ENCODE measurements at regions of chr1 and their contacts with region 1.

Region 1: DNA sequence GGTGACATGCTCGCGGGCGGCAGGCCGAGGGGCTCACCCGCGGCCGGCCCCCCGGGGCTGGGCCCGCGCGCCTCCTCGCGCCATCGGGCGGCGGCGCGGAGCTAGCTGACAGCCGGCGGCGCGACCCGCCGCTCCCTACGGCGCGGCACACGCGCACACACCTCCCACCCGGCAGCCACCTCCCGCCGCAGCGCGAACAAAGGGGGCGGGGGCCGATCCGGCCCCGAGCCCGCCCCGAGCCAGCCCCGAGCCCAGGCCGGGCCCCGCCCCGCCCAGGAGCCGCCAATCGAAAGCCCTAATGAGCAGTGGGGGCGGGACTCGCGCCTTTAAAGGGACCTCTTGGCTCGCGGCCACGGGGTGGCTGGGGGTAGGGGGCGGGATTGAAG is at the start of gene KIF21B:
- DNase-seq: peak; percentile 86 to 95 (median 91)
- ATAC-seq: peak; percentile 91
- H3K4me3 ChIP-seq: peak within 1 kb of the TSS; percentile 93
- H3K4me3 Mint-ChIP-seq: peak within 1 kb of the TSS; percentile 91 to 100 (median 96)
- H3K27ac ChIP-seq: peak within 1 kb of the TSS; percentile 83
- H3K27ac Mint-ChIP-seq: peak within 1 kb of the TSS; percentile 93 to 100 (median 98)
- H3K4me1 ChIP-seq: peaks cover 39 to 59% of the 10 kb centered on the region in 2 donors
- H3K4me1 Mint-ChIP-seq: peaks cover 51 to 77% (median 70%) of the 10 kb centered on the region in 7 donors
- H3K27me3 ChIP-seq: no peaks in the 10 kb centered on the region
- H3K27me3 Mint-ChIP-seq: no peaks in the 10 kb centered on the region
- total RNA-seq, gene KIF21B: 68.3 to 97.6 (median 73.4) TPM

Region 2: GRCh38 chr1:199932462-199932861 is 1091.0 kb before region 1 on chr1:
- CTCF ChIA-PET with region 1: no interaction called
- POLR2A ChIA-PET with region 1: no interaction called
- intact Hi-C with region 1: no loop called
- DNase-seq: peak in 1 of 9 donors; percentile 5
- ATAC-seq: no peak
- H3K4me3 ChIP-seq: peak overlapping the region; percentile 50
- H3K4me3 Mint-ChIP-seq: peak overlapping the region in 9 of 10 donors; percentile 59 to 87 (median 78)
- H3K27ac ChIP-seq: no peak overlapping the region
- H3K27ac Mint-ChIP-seq: peak overlapping the region in 7 of 9 donors; percentile 41 to 79 (median 66)
- H3K4me1 ChIP-seq: no peaks in the 10 kb centered on the region
- H3K4me1 Mint-ChIP-seq: peaks cover 3 to 10% (median 9%) of the 10 kb centered on the region in 7 donors
- H3K27me3 ChIP-seq: no peaks in the 10 kb centered on the region
- H3K27me3 Mint-ChIP-seq: peaks cover 14 to 40% (median 15%) of the 10 kb centered on the region in 5 donors

Region 3: GRCh38 chr1:200620273-200621131 is 403.0 kb before region 1 on chr1 and contains the start of gene KIF14:
- CTCF ChIA-PET with region 1: no interaction called
- POLR2A ChIA-PET with region 1: no interaction called
- intact Hi-C with region 1: loop called (anchors 1 to 2 kb)
- DNase-seq: peak; percentile 81 to 94 (median 89)
- ATAC-seq: peak; percentile 99
- H3K4me3 ChIP-seq: peak within 1 kb of the TSS; percentile 58
- H3K4me3 Mint-ChIP-seq: peak within 1 kb of the TSS; percentile 86 to 99 (median 96)
- H3K27ac ChIP-seq: peak within 1 kb of the TSS; percentile 67
- H3K27ac Mint-ChIP-seq: peak within 1 kb of the TSS; percentile 74 to 96 (median 93)
- H3K4me1 ChIP-seq: peaks cover 6% of the 10 kb centered on the region in 2 donors
- H3K4me1 Mint-ChIP-seq: peaks cover 0 to 56% (median 15%) of the 10 kb centered on the region in 7 donors
- H3K27me3 ChIP-seq: peaks cover 0 to 4% of the 10 kb centered on the region in 2 donors
- H3K27me3 Mint-ChIP-seq: no peaks in the 10 kb centered on the region
- total RNA-seq, gene KIF14: 0.16 to 16.2 (median 0.42) TPM in 3 of 5 experiments, not detected in the others

Region 4: GRCh38 chr1:200738740-200739498 is 284.6 kb before region 1 on chr1 and contains the start of gene CAMSAP2:
- CTCF ChIA-PET with region 1: no interaction called
- POLR2A ChIA-PET with region 1: no interaction called
- intact Hi-C with region 1: loop called in 1 of 2 experiments (anchors 1 kb)
- DNase-seq: peak; percentile 43 to 76 (median 69)
- ATAC-seq: peak; percentile 80
- H3K4me3 ChIP-seq: peak within 1 kb of the TSS; percentile 74
- H3K4me3 Mint-ChIP-seq: peak within 1 kb of the TSS; percentile 85 to 99 (median 98)
- H3K27ac ChIP-seq: peak within 1 kb of the TSS; percentile 75
- H3K27ac Mint-ChIP-seq: peak within 1 kb of the TSS; percentile 78 to 97 (median 93)
- H3K4me1 ChIP-seq: peaks cover 5 to 23% of the 10 kb centered on the region in 2 donors
- H3K4me1 Mint-ChIP-seq: peaks cover 16 to 49% (median 41%) of the 10 kb centered on the region in 7 donors
- H3K27me3 ChIP-seq: no peaks in the 10 kb centered on the region
- H3K27me3 Mint-ChIP-seq: peaks cover 0 to 45% (median 0%) of the 10 kb centered on the region in 5 donors
- total RNA-seq, gene CAMSAP2: 0.36 to 11.4 (median 5.5) TPM

Region 5: DNA sequence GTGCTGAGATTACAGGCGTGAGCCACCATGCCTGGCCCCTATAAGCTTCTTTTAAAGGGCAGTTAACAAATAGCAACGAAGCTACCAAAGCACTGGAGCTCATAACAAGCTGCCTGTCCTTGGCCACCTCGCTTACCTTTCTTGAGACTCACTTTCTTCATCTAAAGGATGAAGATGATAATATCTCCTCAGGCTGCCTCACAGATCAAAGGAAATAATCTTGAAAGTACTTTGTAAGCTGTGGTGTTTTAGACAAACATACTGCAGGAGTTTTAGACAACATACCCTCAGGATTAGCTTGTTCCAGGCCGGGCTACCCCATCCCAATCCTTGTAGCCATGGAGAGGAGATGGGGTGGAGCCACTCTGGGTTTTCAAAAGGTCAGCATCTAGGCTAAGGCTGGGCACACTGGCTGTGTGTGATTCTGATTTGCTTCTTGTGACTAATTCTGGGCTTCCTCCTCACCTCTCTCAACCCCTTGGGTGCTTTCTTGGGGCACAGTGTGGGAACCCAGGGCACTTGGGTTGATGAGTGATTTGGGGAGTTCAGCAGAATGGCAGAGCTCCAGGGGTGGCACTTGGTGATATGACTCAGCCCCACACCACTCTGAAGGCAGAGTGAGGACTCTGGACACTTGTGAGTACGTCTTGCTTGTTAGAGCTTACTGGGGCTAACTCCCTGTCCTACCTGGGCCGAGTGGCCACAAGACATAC is 145.5 kb before region 1 on chr1:
- CTCF ChIA-PET with region 1: no interaction called
- POLR2A ChIA-PET with region 1: no interaction called
- intact Hi-C with region 1: no loop called
- DNase-seq: no peak
- ATAC-seq: peak; percentile 39
- H3K4me3 ChIP-seq: no peak overlapping the region
- H3K4me3 Mint-ChIP-seq: peak overlapping the region in 3 of 10 donors; percentile 25 to 52 (median 41)
- H3K27ac ChIP-seq: no peak overlapping the region
- H3K27ac Mint-ChIP-seq: peak overlapping the region in 3 of 9 donors; percentile 9 to 65 (median 14)
- H3K4me1 ChIP-seq: peaks cover 13 to 24% of the 10 kb centered on the region in 2 donors
- H3K4me1 Mint-ChIP-seq: peaks cover 6 to 43% (median 29%) of the 10 kb centered on the region in 7 donors
- H3K27me3 ChIP-seq: no peaks in the 10 kb centered on the region
- H3K27me3 Mint-ChIP-seq: peaks cover 8 to 70% (median 19%) of the 10 kb centered on the region in 5 donors

Region 6: DNA sequence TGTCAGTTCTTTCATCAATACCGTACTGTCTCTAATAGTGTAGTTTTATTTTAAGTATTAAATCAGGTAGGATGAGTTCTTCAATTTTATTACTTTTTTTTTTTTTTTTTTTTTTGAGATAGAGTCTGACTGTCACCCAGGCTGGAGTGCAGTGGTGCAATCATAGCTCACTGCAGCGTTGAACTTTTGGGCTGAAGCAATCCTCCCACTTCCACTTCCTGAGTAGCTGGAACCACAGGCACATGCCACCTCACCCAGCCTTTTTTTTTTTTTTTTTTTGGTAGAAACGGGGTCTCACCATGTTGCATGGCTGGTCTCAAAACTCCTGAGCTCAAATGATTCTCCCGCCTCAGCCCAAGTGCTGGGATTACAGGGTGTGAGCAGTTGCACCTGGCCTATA is 84.6 kb before region 1 on chr1:
- CTCF ChIA-PET with region 1: no interaction called
- POLR2A ChIA-PET with region 1: no interaction called
- intact Hi-C with region 1: no loop called
- DNase-seq: no peak
- ATAC-seq: peak; percentile 67
- H3K4me3 ChIP-seq: no peak overlapping the region
- H3K4me3 Mint-ChIP-seq: no peak overlapping the region
- H3K27ac ChIP-seq: no peak overlapping the region
- H3K27ac Mint-ChIP-seq: no peak overlapping the region
- H3K4me1 ChIP-seq: no peaks in the 10 kb centered on the region
- H3K4me1 Mint-ChIP-seq: peaks cover 0 to 9% (median 4%) of the 10 kb centered on the region in 7 donors
- H3K27me3 ChIP-seq: no peaks in the 10 kb centered on the region
- H3K27me3 Mint-ChIP-seq: peaks cover 0 to 18% (median 0%) of the 10 kb centered on the region in 5 donors

Region 7: GRCh38 chr1:200979574-200980451 is 43.7 kb before region 1 on chr1:
- CTCF ChIA-PET with region 1: interaction called, 23 read pairs
- POLR2A ChIA-PET with region 1: interaction called, 4 read pairs
- intact Hi-C with region 1: no loop called
- DNase-seq: peak in 8 of 9 donors; percentile 25 to 71 (median 40)
- ATAC-seq: peak; percentile 62
- H3K4me3 ChIP-seq: no peak overlapping the region
- H3K4me3 Mint-ChIP-seq: no peak overlapping the region
- H3K27ac ChIP-seq: no peak overlapping the region
- H3K27ac Mint-ChIP-seq: peak overlapping the region in 6 of 9 donors; percentile 32 to 77 (median 50)
- H3K4me1 ChIP-seq: no peaks in the 10 kb centered on the region
- H3K4me1 Mint-ChIP-seq: peaks cover 0 to 6% (median 0%) of the 10 kb centered on the region in 7 donors
- H3K27me3 ChIP-seq: no peaks in the 10 kb centered on the region
- H3K27me3 Mint-ChIP-seq: no peaks in the 10 kb centered on the region

Region 8: GRCh38 chr1:201042779-201043461 is 19.4 kb after region 1 on chr1:
- CTCF ChIA-PET with region 1: interaction called, 18 read pairs
- POLR2A ChIA-PET with region 1: interaction called, 8 read pairs
- intact Hi-C with region 1: loop called (anchors 1 kb)
- DNase-seq: peak; percentile 54 to 80 (median 69)
- ATAC-seq: peak; percentile 91
- H3K4me3 ChIP-seq: no peak overlapping the region
- H3K4me3 Mint-ChIP-seq: peak overlapping the region in 2 of 10 donors; percentile 18 to 35
- H3K27ac ChIP-seq: no peak overlapping the region
- H3K27ac Mint-ChIP-seq: peak overlapping the region in 4 of 9 donors; percentile 6 to 39 (median 22)
- H3K4me1 ChIP-seq: peaks cover 0 to 3% of the 10 kb centered on the region in 2 donors
- H3K4me1 Mint-ChIP-seq: peaks cover 0 to 5% (median 3%) of the 10 kb centered on the region in 7 donors
- H3K27me3 ChIP-seq: no peaks in the 10 kb centered on the region
- H3K27me3 Mint-ChIP-seq: peaks cover 0 to 16% (median 0%) of the 10 kb centered on the region in 5 donors

Region 9: DNA sequence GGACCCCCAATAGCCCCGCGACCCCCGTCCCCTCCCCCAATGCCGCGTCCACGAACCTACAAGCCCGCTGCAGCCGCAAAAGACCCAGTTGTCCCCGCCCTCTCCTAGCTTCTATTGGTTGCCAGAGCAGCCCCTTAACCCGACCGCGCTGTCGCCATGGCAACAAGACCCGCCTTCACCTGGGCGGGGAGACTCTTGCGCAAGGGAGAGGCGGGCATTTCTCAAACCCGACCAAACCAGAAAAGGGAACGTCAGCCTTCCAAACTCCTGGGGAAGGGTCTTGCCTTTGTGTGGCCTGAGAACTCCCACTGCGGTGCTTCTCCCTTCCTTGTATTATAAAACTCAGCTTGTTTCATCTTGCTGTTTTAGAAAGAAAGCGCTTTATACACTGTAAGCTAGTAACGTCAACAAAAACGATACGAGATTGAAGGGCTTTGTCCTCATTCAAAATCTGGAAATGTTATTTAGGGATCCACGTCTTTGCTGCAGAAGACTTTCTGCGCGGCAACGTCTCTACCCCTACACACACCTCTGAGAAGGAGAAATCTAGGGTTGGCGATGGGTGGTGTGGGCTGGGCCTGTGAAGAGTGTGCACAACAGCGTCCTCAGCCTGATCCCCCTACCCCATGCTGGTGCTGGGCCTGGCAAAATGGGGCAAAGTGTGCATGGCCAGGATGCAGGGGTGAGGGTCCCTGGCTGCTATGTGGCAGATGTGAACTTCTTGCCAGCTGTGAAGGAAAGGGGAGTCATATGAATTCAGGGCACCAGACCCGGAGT is 131.1 kb after region 1 on chr1 and contains the start of gene TMEM9:
- CTCF ChIA-PET with region 1: interaction called, 3 read pairs
- POLR2A ChIA-PET with region 1: interaction called, 4 read pairs
- intact Hi-C with region 1: loop called (anchors 1 kb)
- DNase-seq: peak; percentile 94 to 99 (median 97)
- ATAC-seq: peak; percentile 97
- H3K4me3 ChIP-seq: peak within 1 kb of the TSS; percentile 48
- H3K4me3 Mint-ChIP-seq: peak within 1 kb of the TSS; percentile 86 to 94 (median 93)
- H3K27ac ChIP-seq: peak within 1 kb of the TSS; percentile 65
- H3K27ac Mint-ChIP-seq: peak within 1 kb of the TSS; percentile 83 to 96 (median 91)
- H3K4me1 ChIP-seq: peaks cover 7 to 14% of the 10 kb centered on the region in 2 donors
- H3K4me1 Mint-ChIP-seq: peaks cover 12 to 36% (median 20%) of the 10 kb centered on the region in 7 donors
- H3K27me3 ChIP-seq: no peaks in the 10 kb centered on the region
- H3K27me3 Mint-ChIP-seq: peaks cover 6 to 25% (median 9%) of the 10 kb centered on the region in 5 donors
- total RNA-seq, gene TMEM9: 15.3 to 24.5 (median 16.7) TPM

Measured in naive thymus-derived CD4-positive, alpha-beta T cell (primary cell).